Naive thymus-derived CD4-positive, alpha-beta T cell (primary cell): ENCODE measurements at regions of chr16 and their contacts with region 1.

Region 1: GRCh38 chr16:50763211-50763610 is 21.3 kb downstream of the CYLD start:
- DNase-seq: no peak
- ATAC-seq: no peak
- H3K4me3 ChIP-seq: no peak overlapping the region
- H3K4me3 Mint-ChIP-seq: peak overlapping the region in 9 of 10 donors; percentile 9 to 75 (median 61)
- H3K27ac ChIP-seq: no peak overlapping the region
- H3K27ac Mint-ChIP-seq: peak overlapping the region in 4 of 9 donors; percentile 38 to 84 (median 48)
- H3K4me1 ChIP-seq: peaks cover 57 to 72% of the 10 kb centered on the region in 2 donors
- H3K4me1 Mint-ChIP-seq: peaks cover 68 to 99% (median 92%) of the 10 kb centered on the region in 7 donors
- H3K27me3 ChIP-seq: no peaks in the 10 kb centered on the region
- H3K27me3 Mint-ChIP-seq: no peaks in the 10 kb centered on the region

Region 2: DNA sequence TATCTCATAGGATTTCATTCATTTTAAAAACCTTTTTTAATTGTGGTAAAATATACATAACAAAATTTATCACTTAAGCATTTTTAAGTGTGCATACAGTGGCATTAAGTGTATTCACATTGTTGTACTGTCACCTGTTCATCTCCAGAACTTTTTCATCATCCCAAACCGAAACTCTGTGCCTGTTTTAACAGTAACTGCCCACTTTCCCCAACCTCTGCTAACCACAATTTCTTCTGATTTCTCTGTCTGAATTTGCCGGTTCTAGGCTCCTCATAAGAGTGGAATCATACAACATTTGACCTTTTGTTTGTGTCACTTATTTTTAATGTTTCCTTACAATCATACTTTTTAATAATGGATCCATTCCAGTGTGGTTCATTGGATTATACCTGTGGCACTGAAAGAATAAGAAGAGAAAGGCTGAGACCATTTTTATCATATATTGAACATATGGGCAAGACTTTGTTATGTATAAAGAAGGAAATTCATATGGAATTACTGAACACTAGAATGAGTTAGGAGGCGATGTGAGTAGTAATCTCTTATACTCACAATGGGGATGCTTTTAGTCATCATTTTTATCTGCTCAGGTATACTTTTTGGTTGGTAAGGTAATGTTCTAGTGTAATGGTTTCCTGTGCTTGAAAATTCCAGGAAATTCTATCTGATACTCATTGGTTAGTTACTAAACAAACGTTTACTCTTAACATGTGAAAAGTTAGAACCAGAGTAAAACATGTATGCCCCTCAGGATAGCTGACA is 10.6 kb before region 1 on chr16:
- CTCF ChIA-PET with region 1: interaction called, 4 read pairs
- POLR2A ChIA-PET with region 1: interaction called, 7 read pairs
- intact Hi-C with region 1: loop called in 1 of 2 experiments (anchors 1 kb)
- DNase-seq: no peak
- ATAC-seq: no peak
- H3K4me3 ChIP-seq: no peak overlapping the region
- H3K4me3 Mint-ChIP-seq: peak overlapping the region; percentile 8 to 82 (median 56)
- H3K27ac ChIP-seq: no peak overlapping the region
- H3K27ac Mint-ChIP-seq: peak overlapping the region in 7 of 9 donors; percentile 16 to 84 (median 39)
- H3K4me1 ChIP-seq: peaks cover 41 to 58% of the 10 kb centered on the region in 2 donors
- H3K4me1 Mint-ChIP-seq: peaks cover 34 to 92% (median 86%) of the 10 kb centered on the region in 7 donors
- H3K27me3 ChIP-seq: no peaks in the 10 kb centered on the region
- H3K27me3 Mint-ChIP-seq: no peaks in the 10 kb centered on the region

Region 3: DNA sequence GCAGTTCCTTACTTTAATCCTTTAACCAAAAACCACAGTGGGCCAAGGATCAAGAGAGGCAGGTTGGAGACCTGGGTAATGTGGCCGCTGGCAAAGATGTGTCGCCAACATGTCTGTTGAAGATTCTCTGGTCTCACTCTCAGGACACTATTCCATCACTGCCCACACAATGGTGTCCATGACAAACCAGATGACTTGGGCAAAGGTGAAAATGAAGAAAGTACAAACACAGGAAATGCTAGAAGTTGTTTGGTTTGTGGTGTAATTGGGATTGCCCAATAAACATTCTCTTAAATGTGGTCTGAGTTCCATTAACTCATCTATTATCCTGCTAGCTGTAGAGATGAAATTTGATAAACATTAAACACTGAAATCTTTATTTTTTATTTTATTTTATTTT is 344.5 kb after region 1 on chr16:
- CTCF ChIA-PET with region 1: no interaction called
- POLR2A ChIA-PET with region 1: no interaction called
- intact Hi-C with region 1: no loop called
- DNase-seq: no peak
- ATAC-seq: no peak
- H3K4me3 ChIP-seq: no peak overlapping the region
- H3K4me3 Mint-ChIP-seq: no peak overlapping the region
- H3K27ac ChIP-seq: no peak overlapping the region
- H3K27ac Mint-ChIP-seq: no peak overlapping the region
- H3K4me1 ChIP-seq: no peaks in the 10 kb centered on the region
- H3K4me1 Mint-ChIP-seq: no peaks in the 10 kb centered on the region
- H3K27me3 ChIP-seq: no peaks in the 10 kb centered on the region
- H3K27me3 Mint-ChIP-seq: peaks cover 20 to 36% (median 35%) of the 10 kb centered on the region in 5 donors